CD4-positive, alpha-beta T cell (primary cell): ENCODE measurements at regions of chr6 and their contacts with region 1.

Region 1: GRCh38 chr6:42166444-42167141 is 6.6 kb upstream of the GUCA1A start:
- DNase-seq: peak; percentile 61 to 85 (median 72)
- ATAC-seq: peak; percentile 98
- H3K4me3 ChIP-seq: no peak overlapping the region
- H3K4me3 Mint-ChIP-seq: no peak overlapping the region
- H3K27ac ChIP-seq: no peak overlapping the region
- H3K27ac Mint-ChIP-seq: no peak overlapping the region
- H3K4me1 ChIP-seq: peaks cover 6% of the 10 kb centered on the region
- H3K4me1 Mint-ChIP-seq: peaks cover 6% of the 10 kb centered on the region
- H3K27me3 ChIP-seq: peaks cover 0 to 2% of the 10 kb centered on the region in 2 experiments
- H3K27me3 Mint-ChIP-seq: peaks cover 6% of the 10 kb centered on the region
- CTCF ChIP-seq: peak; percentile 83

Region 2: GRCh38 chr6:41602864-41603608 is 563.6 kb before region 1 on chr6:
- CTCF ChIA-PET with region 1: no interaction called
- POLR2A ChIA-PET with region 1: no interaction called
- intact Hi-C with region 1: loop called in 1 of 2 experiments (anchors 2 kb)
- DNase-seq: peak; percentile 54 to 86 (median 66)
- ATAC-seq: peak; percentile 80
- H3K4me3 ChIP-seq: no peak overlapping the region
- H3K4me3 Mint-ChIP-seq: no peak overlapping the region
- H3K27ac ChIP-seq: no peak overlapping the region
- H3K27ac Mint-ChIP-seq: no peak overlapping the region
- H3K4me1 ChIP-seq: peaks cover 8% of the 10 kb centered on the region
- H3K4me1 Mint-ChIP-seq: no peaks in the 10 kb centered on the region
- H3K27me3 ChIP-seq: peaks cover 0 to 3% of the 10 kb centered on the region in 2 experiments
- H3K27me3 Mint-ChIP-seq: no peaks in the 10 kb centered on the region
- CTCF ChIP-seq: peak; percentile 80

Region 3: DNA sequence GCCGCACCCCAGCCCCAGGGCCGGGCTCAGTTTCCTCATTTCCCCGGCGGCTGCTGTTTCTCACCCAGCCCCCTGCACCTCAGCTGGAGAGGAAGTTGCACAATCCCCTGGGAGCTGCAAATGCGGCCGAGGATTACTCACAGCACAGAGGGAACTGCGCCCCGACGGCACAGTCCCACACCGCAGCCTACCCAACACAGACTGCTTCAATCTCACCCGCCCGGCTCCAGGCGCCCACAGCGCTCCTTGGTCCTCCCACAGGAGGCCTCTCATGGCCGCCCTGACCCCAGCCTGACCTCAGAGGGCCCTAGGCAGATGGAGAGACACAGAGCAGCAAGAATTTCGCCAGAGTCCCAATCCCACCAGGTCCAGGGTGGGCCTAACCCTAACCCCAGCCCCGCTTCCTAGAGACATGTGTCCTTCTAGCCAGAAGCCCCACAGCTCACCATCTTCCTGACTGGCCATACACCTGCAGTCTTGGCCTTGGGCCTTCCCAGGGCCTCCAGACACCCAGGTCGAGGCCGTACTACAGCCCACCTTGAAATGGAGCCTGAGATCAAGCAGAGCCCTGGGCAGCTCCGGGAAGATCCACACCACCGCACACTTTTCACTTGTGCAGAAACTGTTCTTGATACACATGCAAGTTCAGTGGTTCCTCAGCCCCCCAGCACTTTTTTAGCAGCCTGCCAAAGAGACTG is 442.9 kb before region 1 on chr6:
- CTCF ChIA-PET with region 1: no interaction called
- POLR2A ChIA-PET with region 1: no interaction called
- intact Hi-C with region 1: no loop called
- DNase-seq: peak in 3 of 14 experiments; percentile 29 to 76 (median 73)
- ATAC-seq: peak; percentile 34
- H3K4me3 ChIP-seq: no peak overlapping the region
- H3K4me3 Mint-ChIP-seq: no peak overlapping the region
- H3K27ac ChIP-seq: no peak overlapping the region
- H3K27ac Mint-ChIP-seq: no peak overlapping the region
- H3K4me1 ChIP-seq: peaks cover 46% of the 10 kb centered on the region
- H3K4me1 Mint-ChIP-seq: peaks cover 10% of the 10 kb centered on the region
- H3K27me3 ChIP-seq: no peaks in the 10 kb centered on the region
- H3K27me3 Mint-ChIP-seq: no peaks in the 10 kb centered on the region
- CTCF ChIP-seq: no peak

Region 4: GRCh38 chr6:41779793-41780545 is 386.6 kb before region 1 on chr6 and contains the start of gene FRS3:
- CTCF ChIA-PET with region 1: interaction called, 3 read pairs
- POLR2A ChIA-PET with region 1: no interaction called
- intact Hi-C with region 1: loop called (anchors 1 to 2 kb)
- DNase-seq: peak; percentile 95 to 100 (median 99)
- ATAC-seq: peak; percentile 97
- H3K4me3 ChIP-seq: peak within 1 kb of the TSS; percentile 75
- H3K4me3 Mint-ChIP-seq: peak within 1 kb of the TSS; percentile 99
- H3K27ac ChIP-seq: no peak within 1 kb of the TSS
- H3K27ac Mint-ChIP-seq: peak within 1 kb of the TSS; percentile 68
- H3K4me1 ChIP-seq: peaks cover 24% of the 10 kb centered on the region
- H3K4me1 Mint-ChIP-seq: peaks cover 25% of the 10 kb centered on the region
- H3K27me3 ChIP-seq: peaks cover 7 to 8% of the 10 kb centered on the region in 2 experiments
- H3K27me3 Mint-ChIP-seq: peaks cover 11% of the 10 kb centered on the region
- CTCF ChIP-seq: peak; percentile 75
- total RNA-seq, gene FRS3: 4.6 to 5.4 TPM

Region 5: DNA sequence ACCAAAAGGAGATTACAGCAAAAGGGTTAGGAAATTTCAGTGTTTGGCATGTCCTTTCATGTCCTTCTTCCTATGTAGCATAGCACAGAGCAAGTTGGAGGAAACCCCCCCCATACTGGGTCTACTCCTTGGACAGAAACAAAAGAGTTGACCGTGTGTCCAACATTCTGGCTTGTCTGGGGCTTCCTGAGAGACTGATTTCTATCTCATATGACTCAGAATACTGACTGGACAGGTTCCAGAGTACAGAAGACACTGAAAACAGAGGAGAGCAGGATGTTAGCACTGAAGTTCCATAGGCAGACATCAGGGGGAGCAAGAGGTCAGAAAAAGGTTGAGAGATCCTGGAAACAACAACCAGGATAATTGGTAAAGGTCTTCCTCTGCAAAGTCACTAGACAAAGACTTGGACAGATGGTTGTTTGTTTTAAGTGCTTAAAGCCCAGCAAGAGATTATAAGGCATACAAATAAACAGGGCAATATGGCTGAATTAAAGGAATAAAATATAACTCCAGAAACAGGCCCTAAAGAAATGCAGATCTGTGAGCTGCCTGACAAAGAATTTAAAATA is 319.8 kb before region 1 on chr6:
- CTCF ChIA-PET with region 1: no interaction called
- POLR2A ChIA-PET with region 1: interaction called, 3 read pairs
- intact Hi-C with region 1: loop called (anchors 1 to 2 kb)
- DNase-seq: peak; percentile 18 to 77 (median 37)
- ATAC-seq: peak; percentile 78
- H3K4me3 ChIP-seq: no peak overlapping the region
- H3K4me3 Mint-ChIP-seq: no peak overlapping the region
- H3K27ac ChIP-seq: no peak overlapping the region
- H3K27ac Mint-ChIP-seq: no peak overlapping the region
- H3K4me1 ChIP-seq: no peaks in the 10 kb centered on the region
- H3K4me1 Mint-ChIP-seq: peaks cover 6% of the 10 kb centered on the region
- H3K27me3 ChIP-seq: no peaks in the 10 kb centered on the region
- H3K27me3 Mint-ChIP-seq: no peaks in the 10 kb centered on the region
- CTCF ChIP-seq: peak; percentile 91

Region 6: GRCh38 chr6:41901882-41902519 is 264.6 kb before region 1 on chr6:
- CTCF ChIA-PET with region 1: no interaction called
- POLR2A ChIA-PET with region 1: no interaction called
- intact Hi-C with region 1: loop called in 1 of 2 experiments (anchors 1 kb)
- DNase-seq: peak; percentile 32 to 81 (median 44)
- ATAC-seq: peak; percentile 74
- H3K4me3 ChIP-seq: no peak overlapping the region
- H3K4me3 Mint-ChIP-seq: no peak overlapping the region
- H3K27ac ChIP-seq: no peak overlapping the region
- H3K27ac Mint-ChIP-seq: no peak overlapping the region
- H3K4me1 ChIP-seq: peaks cover 8% of the 10 kb centered on the region
- H3K4me1 Mint-ChIP-seq: peaks cover 12% of the 10 kb centered on the region
- H3K27me3 ChIP-seq: no peaks in the 10 kb centered on the region
- H3K27me3 Mint-ChIP-seq: no peaks in the 10 kb centered on the region
- CTCF ChIP-seq: peak; percentile 64

Region 7: GRCh38 chr6:42075159-42075838 is 91.3 kb before region 1 on chr6:
- CTCF ChIA-PET with region 1: no interaction called
- POLR2A ChIA-PET with region 1: no interaction called
- intact Hi-C with region 1: loop called (anchors 1 kb)
- DNase-seq: peak; percentile 21 to 69 (median 42)
- ATAC-seq: no peak
- H3K4me3 ChIP-seq: no peak overlapping the region
- H3K4me3 Mint-ChIP-seq: no peak overlapping the region
- H3K27ac ChIP-seq: no peak overlapping the region
- H3K27ac Mint-ChIP-seq: no peak overlapping the region
- H3K4me1 ChIP-seq: peaks cover 2% of the 10 kb centered on the region
- H3K4me1 Mint-ChIP-seq: peaks cover 6% of the 10 kb centered on the region
- H3K27me3 ChIP-seq: no peaks in the 10 kb centered on the region
- H3K27me3 Mint-ChIP-seq: no peaks in the 10 kb centered on the region
- CTCF ChIP-seq: peak; percentile 69

Region 8: GRCh38 chr6:42118162-42119001 is 48.2 kb before region 1 on chr6:
- CTCF ChIA-PET with region 1: no interaction called
- POLR2A ChIA-PET with region 1: no interaction called
- intact Hi-C with region 1: no loop called
- DNase-seq: no peak
- ATAC-seq: no peak
- H3K4me3 ChIP-seq: no peak overlapping the region
- H3K4me3 Mint-ChIP-seq: no peak overlapping the region
- H3K27ac ChIP-seq: no peak overlapping the region
- H3K27ac Mint-ChIP-seq: no peak overlapping the region
- H3K4me1 ChIP-seq: no peaks in the 10 kb centered on the region
- H3K4me1 Mint-ChIP-seq: no peaks in the 10 kb centered on the region
- H3K27me3 ChIP-seq: peaks cover 0 to 2% of the 10 kb centered on the region in 2 experiments
- H3K27me3 Mint-ChIP-seq: peaks cover 6% of the 10 kb centered on the region
- CTCF ChIP-seq: no peak